ENCODE measurements at regions of chr14 and their contacts with region 1.

Region 1: GRCh38 chr14:34322940-34323418 is 139.1 kb downstream of the SPTSSA start:
- DNase-seq: peak; percentile 41
- H3K4me3 Mint-ChIP-seq: no peak overlapping the region
- H3K27ac Mint-ChIP-seq: no peak overlapping the region
- H3K4me1 Mint-ChIP-seq: no peaks in the 10 kb centered on the region
- H3K27me3 Mint-ChIP-seq: peaks cover 6% of the 10 kb centered on the region

Region 2: GRCh38 chr14:32710731-32711680 is 1612.0 kb before region 1 on chr14:
- intact Hi-C with region 1: loop called (anchors 5 kb)
- DNase-seq: no peak
- H3K4me3 Mint-ChIP-seq: no peak overlapping the region
- H3K27ac Mint-ChIP-seq: no peak overlapping the region
- H3K4me1 Mint-ChIP-seq: no peaks in the 10 kb centered on the region
- H3K27me3 Mint-ChIP-seq: peaks cover 2% of the 10 kb centered on the region

Region 3: GRCh38 chr14:33799705-33800570 is 523.0 kb before region 1 on chr14:
- intact Hi-C with region 1: loop called (anchors 5 kb)
- DNase-seq: no peak
- H3K4me3 Mint-ChIP-seq: no peak overlapping the region
- H3K27ac Mint-ChIP-seq: no peak overlapping the region
- H3K4me1 Mint-ChIP-seq: peaks cover 5% of the 10 kb centered on the region
- H3K27me3 Mint-ChIP-seq: peaks cover 48% of the 10 kb centered on the region

Measured in activated T-helper 1 cell treated with anti-CD3 and anti-CD28 coated beads, Interleukin-12 subunit alpha, Interleukin-12 subunit beta, Interleukin-2, Interleukin-4 antibody, amounts not matched to agents 30 ng/mL and 10 ng/mL and 1 ng/mL, durations not matched to agents 14 hours and 24 hours and 36 hours (primary cell).